ENCODE measurements at regions of chr19 and their contacts with region 1.

Region 1: DNA sequence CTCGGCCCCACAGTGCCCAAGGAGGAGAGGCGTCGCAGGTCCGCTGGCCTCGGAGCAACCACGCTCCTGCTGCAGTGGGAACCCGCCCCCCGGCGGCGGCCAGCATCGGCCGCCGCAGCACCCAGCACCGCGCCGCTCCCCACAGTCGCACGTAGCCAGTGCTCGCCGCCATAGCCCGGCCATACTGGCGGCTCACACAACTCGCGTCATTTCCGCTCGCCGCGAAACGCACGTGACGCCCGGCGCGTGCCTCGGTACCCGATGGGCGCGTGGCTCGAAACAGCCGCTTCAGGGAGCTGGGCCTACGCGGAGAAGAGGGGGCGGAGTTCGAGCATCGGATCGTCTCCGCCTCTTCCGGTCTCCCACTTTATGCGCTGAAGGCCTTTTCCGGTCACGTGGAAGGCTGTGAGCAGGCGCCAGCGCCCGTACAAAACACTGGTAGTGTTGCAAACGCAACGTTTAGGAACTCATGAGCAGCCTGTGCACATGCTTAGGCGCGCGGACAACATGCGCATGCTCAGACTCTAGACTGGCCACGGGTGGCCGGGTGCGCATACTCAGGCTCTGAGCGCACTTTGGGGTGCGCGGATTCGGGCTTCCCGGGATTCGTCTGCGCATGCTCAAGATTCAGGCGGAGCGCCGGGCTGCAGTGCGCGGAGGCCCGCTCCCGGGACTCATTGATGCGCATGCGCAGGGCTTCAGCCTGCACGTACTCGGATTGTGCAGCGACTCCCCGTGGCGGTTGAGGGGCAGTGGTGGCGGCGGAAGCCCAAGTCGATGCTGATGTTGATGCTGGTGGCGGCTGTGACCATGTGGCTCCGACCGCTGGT is at the starts of genes CATSPERD and LONP1:
- DNase-seq: peak; percentile 99
- ATAC-seq: peak; percentile 84
- H3K4me3 Mint-ChIP-seq: peak within 1 kb of the TSS; percentile 98
- H3K27ac Mint-ChIP-seq: peak within 1 kb of the TSS; percentile 99
- H3K4me1 Mint-ChIP-seq: peaks cover 27% of the 10 kb centered on the region
- H3K27me3 Mint-ChIP-seq: no peaks in the 10 kb centered on the region
- total RNA-seq, gene CATSPERD: not detected
- total RNA-seq, gene LONP1: 287 to 315 TPM

Region 2: GRCh38 chr19:4791170-4792018 is 928.8 kb before region 1 on chr19 and contains the start of gene FEM1A:
- CTCF ChIA-PET with region 1: no interaction called
- POLR2A ChIA-PET with region 1: no interaction called
- intact Hi-C with region 1: loop called in 1 of 2 experiments (anchors 1 kb)
- DNase-seq: peak; percentile 99
- ATAC-seq: peak; percentile 97
- H3K4me3 Mint-ChIP-seq: peak within 1 kb of the TSS; percentile 84
- H3K27ac Mint-ChIP-seq: peak within 1 kb of the TSS; percentile 85
- H3K4me1 Mint-ChIP-seq: peaks cover 40% of the 10 kb centered on the region
- H3K27me3 Mint-ChIP-seq: no peaks in the 10 kb centered on the region
- total RNA-seq, gene FEM1A: 9.2 to 10.6 TPM

Region 3: DNA sequence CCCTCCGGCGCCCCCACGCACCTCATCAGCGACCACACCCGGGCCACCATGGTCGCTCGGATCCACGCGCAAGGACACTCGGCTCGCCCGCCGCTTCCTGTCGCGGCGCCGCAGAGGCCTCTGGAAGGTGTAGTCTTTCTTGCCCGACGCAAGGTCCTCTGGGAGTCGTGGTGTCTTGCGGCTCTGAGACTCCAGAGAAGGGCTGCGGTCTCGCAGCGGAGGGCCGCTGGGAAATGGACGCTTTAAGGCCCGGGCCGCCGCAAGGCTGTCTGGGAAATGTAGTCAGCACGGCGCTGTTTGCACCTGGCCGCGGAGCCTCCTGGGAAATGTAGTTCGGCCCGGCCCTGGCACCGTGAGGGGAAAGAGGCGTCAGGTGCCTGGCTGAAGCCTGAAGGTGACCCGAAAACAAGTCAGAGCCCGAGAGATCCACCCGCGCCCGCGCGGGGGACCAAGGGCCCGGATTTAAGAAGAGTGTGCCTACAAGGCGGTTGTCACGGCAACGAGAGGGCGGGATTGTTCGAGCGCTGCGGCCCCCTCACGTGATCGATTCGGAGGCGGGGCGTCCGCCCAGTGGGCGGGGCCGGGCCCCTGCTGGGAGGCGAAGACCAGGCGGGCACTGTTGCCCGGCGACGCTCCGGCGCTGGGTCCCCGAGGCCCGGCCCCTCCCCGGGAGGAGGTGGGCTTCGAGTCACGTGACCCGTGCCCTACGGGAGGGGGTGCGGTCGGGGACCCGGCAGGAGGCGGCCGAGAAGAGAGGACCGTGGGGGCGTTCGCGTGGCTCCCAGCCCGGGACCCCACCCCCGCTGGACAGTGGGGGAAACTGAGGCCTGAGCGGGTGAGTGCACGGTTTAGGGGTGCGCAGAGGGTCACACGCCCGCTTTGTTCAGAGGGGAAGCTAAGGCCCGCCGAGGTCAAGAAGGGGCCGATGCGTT is 39.5 kb before region 1 on chr19 and contains the starts of genes HSD11B1L and MICOS13:
- CTCF ChIA-PET with region 1: interaction called, 9 read pairs
- POLR2A ChIA-PET with region 1: no interaction called
- intact Hi-C with region 1: loop called (anchors 1 to 2 kb)
- DNase-seq: peak; percentile 99
- ATAC-seq: peak; percentile 97
- H3K4me3 Mint-ChIP-seq: peak within 1 kb of the TSS; percentile 99
- H3K27ac Mint-ChIP-seq: peak within 1 kb of the TSS; percentile 94
- H3K4me1 Mint-ChIP-seq: peaks cover 20% of the 10 kb centered on the region
- H3K27me3 Mint-ChIP-seq: no peaks in the 10 kb centered on the region
- total RNA-seq, gene HSD11B1L: 2.0 to 3.2 TPM
- total RNA-seq, gene MICOS13: 50.9 to 52.1 TPM

Region 4: DNA sequence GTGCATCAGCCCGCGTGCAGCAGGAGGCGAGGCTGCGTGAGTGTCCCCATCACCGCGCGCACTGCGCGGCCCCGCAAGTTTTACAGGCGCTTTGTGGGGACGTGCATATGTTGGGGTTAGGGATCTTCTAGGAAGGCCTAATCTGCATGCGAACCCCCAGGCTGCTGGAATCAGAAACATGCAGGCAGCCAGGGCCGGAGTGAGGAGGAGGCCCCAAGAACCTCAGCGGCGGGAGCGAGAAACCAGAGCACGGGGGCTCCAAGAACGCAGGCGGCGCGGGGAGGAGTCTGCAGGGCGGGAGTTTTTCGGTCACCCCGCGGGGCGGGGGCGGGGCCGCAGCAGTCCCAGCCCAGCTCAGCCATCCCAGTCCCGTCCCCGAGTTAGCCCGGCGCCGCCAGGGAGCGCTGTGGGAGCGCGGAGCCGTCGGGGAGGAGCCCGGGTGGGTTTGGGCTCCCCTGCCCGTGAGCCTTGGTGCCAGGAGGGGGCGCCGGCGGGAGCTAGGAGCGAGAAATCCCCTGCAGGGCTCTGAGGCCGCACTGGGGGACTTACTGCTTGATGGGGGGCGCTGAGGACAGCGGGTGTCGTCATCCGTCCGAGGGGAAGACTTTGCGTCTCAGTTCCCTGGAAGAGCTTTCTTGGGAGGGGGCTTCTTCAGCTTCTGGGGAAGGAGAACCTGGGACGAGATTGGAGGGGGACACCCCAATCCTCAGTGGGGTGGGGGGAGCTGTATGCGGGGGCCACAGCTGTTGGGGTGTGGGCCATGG is 83.8 kb after region 1 on chr19:
- CTCF ChIA-PET with region 1: interaction called, 4 read pairs
- POLR2A ChIA-PET with region 1: interaction called, 7 read pairs
- intact Hi-C with region 1: loop called in 1 of 2 experiments (anchors 1 kb)
- DNase-seq: peak; percentile 98
- ATAC-seq: peak; percentile 97
- H3K4me3 Mint-ChIP-seq: peak overlapping the region; percentile 63
- H3K27ac Mint-ChIP-seq: peak overlapping the region; percentile 47
- H3K4me1 Mint-ChIP-seq: peaks cover 21% of the 10 kb centered on the region
- H3K27me3 Mint-ChIP-seq: peaks cover 20% of the 10 kb centered on the region

Region 5: DNA sequence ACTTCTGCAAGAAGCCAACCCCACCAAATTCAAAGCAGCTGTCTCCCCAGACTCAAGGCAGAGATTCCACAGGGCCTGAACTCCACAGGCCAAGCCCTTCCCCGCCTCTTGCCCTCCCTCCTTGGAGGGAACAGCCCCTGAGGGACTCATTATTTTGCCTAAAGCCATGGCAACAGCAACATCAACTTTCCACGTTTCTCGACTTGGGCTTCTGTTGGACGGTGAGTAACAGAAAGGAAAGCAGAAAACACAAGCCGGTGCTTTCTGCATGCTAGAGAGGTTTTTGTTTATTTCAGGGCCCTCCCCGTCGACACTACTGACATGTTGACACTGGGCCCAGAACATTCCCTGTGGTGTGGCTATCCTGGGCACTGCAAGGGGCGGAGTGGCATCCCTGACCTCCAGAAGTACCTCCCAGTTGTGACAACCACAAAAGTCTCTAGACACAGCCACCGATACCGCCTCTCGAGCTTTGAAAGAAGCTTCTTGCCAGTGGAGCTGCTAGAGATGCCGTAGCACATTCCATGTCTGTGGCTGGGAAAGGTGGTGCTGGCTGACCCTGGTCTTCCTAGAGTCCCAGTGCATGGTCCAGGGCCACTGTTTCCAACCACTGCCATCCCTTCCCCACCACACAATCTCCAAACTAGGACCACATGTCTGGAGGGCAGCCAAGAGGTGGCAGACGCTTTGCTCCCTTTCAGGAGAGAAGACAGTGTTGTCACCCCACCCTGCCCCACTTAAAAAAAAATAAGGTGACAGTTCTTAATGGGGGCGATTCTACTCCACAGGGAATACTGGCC is 206.7 kb after region 1 on chr19:
- CTCF ChIA-PET with region 1: no interaction called
- POLR2A ChIA-PET with region 1: no interaction called
- intact Hi-C with region 1: no loop called
- DNase-seq: no peak
- ATAC-seq: no peak
- H3K4me3 Mint-ChIP-seq: no peak overlapping the region
- H3K27ac Mint-ChIP-seq: no peak overlapping the region
- H3K4me1 Mint-ChIP-seq: no peaks in the 10 kb centered on the region
- H3K27me3 Mint-ChIP-seq: no peaks in the 10 kb centered on the region

Region 6: DNA sequence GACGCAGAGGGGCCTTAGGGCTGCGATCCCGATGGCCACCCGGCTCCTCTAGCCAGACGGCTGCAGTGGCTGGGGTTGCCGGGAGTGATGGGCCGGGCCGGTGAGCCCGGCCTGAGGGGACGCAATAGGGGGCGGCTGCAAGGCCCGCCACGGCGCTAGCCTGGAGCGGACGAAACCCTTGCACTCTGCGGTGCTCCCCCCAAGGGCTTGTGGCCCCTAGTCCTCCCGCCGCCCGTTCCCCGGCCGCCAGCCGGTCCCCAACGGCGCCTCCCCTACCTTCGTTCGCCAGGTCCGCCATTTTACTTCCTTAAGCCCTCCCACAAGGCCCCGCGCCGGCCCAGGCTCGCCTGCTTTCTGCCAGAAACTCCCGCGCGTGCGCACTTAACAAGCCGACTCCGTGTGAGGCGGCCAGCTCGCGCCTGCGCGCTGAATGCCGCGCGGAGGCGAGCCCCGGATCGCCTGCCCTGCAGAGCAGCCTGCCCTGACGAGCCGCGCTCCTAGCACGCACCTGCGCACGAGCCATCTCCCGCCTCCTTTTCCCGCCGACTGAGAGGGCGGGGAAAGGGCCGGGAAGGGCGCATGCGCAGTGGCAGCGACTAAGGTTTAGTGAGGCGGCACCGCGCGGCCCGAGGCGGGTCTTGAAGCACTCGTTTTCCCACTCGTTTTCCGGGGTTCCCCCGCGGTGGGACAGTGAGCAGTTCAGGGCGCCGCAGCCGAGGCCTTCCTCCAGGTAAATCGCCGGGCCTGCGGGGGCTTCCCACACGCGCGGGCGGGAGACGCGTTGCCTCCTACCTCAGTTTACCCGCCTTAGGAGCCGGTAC is 257.8 kb after region 1 on chr19 and contains the start of gene RANBP3:
- CTCF ChIA-PET with region 1: interaction called, 3 read pairs
- POLR2A ChIA-PET with region 1: interaction called, 3 read pairs
- intact Hi-C with region 1: loop called in 1 of 2 experiments (anchors 1 kb)
- DNase-seq: peak; percentile 99
- ATAC-seq: peak; percentile 92
- H3K4me3 Mint-ChIP-seq: peak within 1 kb of the TSS; percentile 94
- H3K27ac Mint-ChIP-seq: peak within 1 kb of the TSS; percentile 90
- H3K4me1 Mint-ChIP-seq: peaks cover 56% of the 10 kb centered on the region
- H3K27me3 Mint-ChIP-seq: no peaks in the 10 kb centered on the region
- total RNA-seq, gene RANBP3: 85.5 to 103 TPM

Region 7: DNA sequence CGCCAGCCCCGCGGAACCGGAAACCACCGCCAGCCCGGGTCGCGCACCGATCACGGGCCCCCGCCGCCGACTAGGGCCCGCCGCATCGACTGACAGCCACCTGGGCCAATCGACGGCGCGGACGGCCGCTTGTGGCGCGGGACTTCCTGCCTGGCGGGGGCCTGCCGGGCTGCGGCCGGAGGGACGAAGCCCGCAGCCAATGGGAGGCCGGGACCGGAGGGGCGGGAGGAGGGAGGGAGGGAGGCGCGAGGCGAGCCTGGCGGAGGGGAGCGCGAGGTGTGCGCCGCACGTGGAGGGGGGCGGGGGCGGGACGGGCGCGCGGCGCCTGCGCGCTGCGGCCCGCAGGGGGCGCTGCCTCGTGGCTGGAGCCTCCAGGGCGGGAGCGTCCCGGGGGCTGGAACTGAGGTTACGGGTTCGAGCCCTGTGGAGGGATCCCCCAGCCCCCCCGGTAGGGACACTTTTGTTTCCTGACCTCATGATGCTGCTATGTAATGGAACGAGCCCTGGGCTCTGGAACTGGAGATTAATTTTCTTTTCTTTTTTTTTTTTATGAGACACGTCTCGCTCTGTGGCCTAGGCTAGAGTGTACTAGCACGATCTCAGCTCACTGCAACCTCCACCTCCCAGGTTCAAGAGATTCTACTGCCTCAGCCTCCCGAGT is 559.9 kb after region 1 on chr19 and contains the start of gene MLLT1:
- CTCF ChIA-PET with region 1: no interaction called
- POLR2A ChIA-PET with region 1: no interaction called
- intact Hi-C with region 1: loop called in 1 of 2 experiments (anchors 1 kb)
- DNase-seq: peak; percentile 98
- ATAC-seq: peak; percentile 98
- H3K4me3 Mint-ChIP-seq: peak within 1 kb of the TSS; percentile 98
- H3K27ac Mint-ChIP-seq: peak within 1 kb of the TSS; percentile 93
- H3K4me1 Mint-ChIP-seq: peaks cover 38% of the 10 kb centered on the region
- H3K27me3 Mint-ChIP-seq: peaks cover 2% of the 10 kb centered on the region
- total RNA-seq, gene MLLT1: 45.0 to 46.6 TPM

Region 8: DNA sequence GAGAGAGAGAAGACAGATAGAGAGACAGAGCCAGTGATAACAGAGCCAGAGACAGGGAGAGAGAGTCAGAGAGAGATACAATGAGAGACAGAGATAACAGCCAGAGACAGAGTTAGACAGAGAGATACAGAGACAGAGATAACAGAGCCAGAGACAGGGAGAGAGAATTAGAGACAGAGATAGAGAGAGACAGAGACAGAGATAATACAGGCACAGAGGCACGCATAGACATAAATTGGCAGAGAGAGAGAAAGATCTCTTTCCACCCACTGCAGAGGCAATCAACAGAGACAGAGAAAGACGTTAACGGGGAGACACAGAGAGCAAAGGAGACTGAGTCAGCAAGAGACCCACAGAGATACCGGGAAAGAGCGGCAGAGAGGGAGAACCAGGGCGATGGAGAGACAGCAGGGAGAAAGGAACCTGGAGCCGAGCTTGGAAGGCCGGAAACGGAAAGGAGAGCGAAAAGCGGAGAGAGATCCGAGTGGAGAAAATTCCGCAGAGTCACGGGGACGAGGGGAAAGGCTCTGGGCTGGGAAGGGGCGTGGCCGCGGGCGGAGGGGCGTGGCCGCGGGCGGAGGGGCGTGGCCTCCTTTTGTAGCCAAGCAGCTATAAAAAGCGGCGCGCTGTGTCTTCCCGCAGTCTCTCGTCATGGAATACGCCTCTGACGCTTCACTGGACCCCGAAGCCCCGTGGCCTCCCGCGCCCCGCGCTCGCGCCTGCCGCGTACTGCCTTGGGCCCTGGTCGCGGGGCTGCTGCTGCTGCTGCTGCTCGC is 810.4 kb after region 1 on chr19 and contains the start of gene TNFSF9:
- CTCF ChIA-PET with region 1: no interaction called
- POLR2A ChIA-PET with region 1: no interaction called
- intact Hi-C with region 1: no loop called
- DNase-seq: peak; percentile 90
- ATAC-seq: peak; percentile 73
- H3K4me3 Mint-ChIP-seq: peak within 1 kb of the TSS; percentile 77
- H3K27ac Mint-ChIP-seq: peak within 1 kb of the TSS; percentile 80
- H3K4me1 Mint-ChIP-seq: peaks cover 30% of the 10 kb centered on the region
- H3K27me3 Mint-ChIP-seq: peaks cover 36% of the 10 kb centered on the region
- total RNA-seq, gene TNFSF9: 0.49 to 0.57 TPM